AG04449 (cell line): ENCODE measurements at regions of chr1 and their contacts with region 1.

Region 1: GRCh38 chr1:6889875-6890480 is 104.7 kb downstream of the CAMTA1 start:
- DNase-seq: no peak
- H3K4me3 ChIP-seq: no peak overlapping the region
- CTCF ChIP-seq: peak; percentile 77

Region 2: GRCh38 chr1:6560267-6560666 is 329.7 kb before region 1 on chr1:
- CTCF ChIA-PET with region 1: no interaction called
- POLR2A ChIA-PET with region 1: no interaction called
- DNase-seq: no peak
- H3K4me3 ChIP-seq: no peak overlapping the region
- CTCF ChIP-seq: no peak

Region 3: GRCh38 chr1:6727535-6727934 is 162.4 kb before region 1 on chr1:
- CTCF ChIA-PET with region 1: interaction called, 15 read pairs
- POLR2A ChIA-PET with region 1: no interaction called
- DNase-seq: no peak
- H3K4me3 ChIP-seq: no peak overlapping the region
- CTCF ChIP-seq: peak; percentile 69

Region 4: GRCh38 chr1:6794164-6794563 is 95.8 kb before region 1 on chr1:
- CTCF ChIA-PET with region 1: interaction called, 92 read pairs
- POLR2A ChIA-PET with region 1: no interaction called
- DNase-seq: peak; percentile 26
- H3K4me3 ChIP-seq: no peak overlapping the region
- CTCF ChIP-seq: peak; percentile 13

Region 5: GRCh38 chr1:6807782-6808181 is 82.2 kb before region 1 on chr1:
- CTCF ChIA-PET with region 1: interaction called, 28 read pairs
- POLR2A ChIA-PET with region 1: no interaction called
- DNase-seq: no peak
- H3K4me3 ChIP-seq: no peak overlapping the region
- CTCF ChIP-seq: no peak

Region 6: DNA sequence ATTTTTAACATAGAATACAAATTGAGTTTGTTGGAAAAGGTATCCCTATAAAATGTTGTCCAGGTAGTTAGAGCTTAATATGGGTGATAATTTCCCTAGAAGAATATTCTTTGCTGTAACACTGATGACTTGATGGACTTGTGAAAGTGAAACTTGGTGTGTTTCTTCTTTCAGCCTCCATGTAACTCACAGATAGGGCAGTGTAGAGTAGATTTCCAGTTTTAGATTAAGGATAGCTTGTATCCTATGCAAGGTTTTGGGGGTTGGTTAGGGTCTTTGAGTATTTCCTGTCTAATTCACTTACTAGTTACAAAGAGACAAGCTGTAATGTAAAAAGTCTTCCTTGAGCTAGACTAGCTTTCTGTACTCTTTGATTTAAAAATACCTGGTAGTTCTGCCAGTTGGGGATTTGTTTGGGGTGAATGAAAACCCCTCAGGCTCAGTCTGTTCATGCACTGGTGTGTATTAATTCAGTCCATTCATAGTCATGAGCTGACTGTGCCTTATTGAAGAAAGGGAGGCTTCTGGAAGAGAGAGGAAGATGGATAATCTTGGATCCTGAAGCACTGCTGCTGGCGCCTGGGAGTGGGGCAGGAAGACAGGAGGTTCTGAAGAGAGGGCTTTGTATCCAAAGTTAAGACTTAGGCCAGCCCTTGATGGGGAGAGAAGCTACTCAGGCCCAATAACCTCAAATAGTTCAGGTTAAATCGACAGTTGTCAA is 21.2 kb before region 1 on chr1:
- CTCF ChIA-PET with region 1: interaction called, 49 read pairs
- POLR2A ChIA-PET with region 1: no interaction called
- DNase-seq: no peak
- H3K4me3 ChIP-seq: no peak overlapping the region
- CTCF ChIP-seq: no peak

Region 7: DNA sequence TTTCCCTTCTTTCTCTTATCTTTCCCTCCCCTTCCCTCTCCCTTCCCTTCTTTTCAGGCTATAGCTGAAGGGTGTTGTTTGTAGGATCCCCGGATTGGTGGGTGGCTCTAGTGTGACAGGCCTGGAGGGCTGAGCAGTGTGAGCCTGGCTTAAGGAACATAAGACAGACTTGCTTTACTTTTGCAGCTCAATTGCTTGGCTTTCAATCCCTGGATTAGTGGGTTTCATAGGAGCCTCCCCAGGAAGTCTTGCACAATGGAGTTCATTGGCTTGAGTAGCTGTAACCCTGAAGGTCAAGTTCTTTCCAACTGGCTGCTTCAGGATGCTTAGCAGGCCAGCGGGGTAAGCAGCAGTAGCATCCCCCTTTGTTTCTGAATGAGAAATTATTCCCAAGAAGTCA is 22.0 kb after region 1 on chr1:
- CTCF ChIA-PET with region 1: interaction called, 17 read pairs
- POLR2A ChIA-PET with region 1: no interaction called
- DNase-seq: no peak
- H3K4me3 ChIP-seq: no peak overlapping the region
- CTCF ChIP-seq: no peak

Region 8: GRCh38 chr1:7042322-7043190 is 152.6 kb after region 1 on chr1:
- CTCF ChIA-PET with region 1: no interaction called
- POLR2A ChIA-PET with region 1: no interaction called
- DNase-seq: no peak
- H3K4me3 ChIP-seq: no peak overlapping the region
- CTCF ChIP-seq: peak; percentile 17